ENCODE measurements at regions of chr3 and their contacts with region 1.

Region 1: GRCh38 chr3:131856171-131856570 is 178.6 kb downstream of the CPNE4 start:
- DNase-seq: no peak
- H3K4me3 ChIP-seq: no peak overlapping the region
- H3K27ac ChIP-seq: no peak overlapping the region
- H3K4me1 ChIP-seq: no peaks in the 10 kb centered on the region
- H3K27me3 ChIP-seq: no peaks in the 10 kb centered on the region
- CTCF ChIP-seq: no peak
- POLR2A ChIP-seq: no peak

Region 2: DNA sequence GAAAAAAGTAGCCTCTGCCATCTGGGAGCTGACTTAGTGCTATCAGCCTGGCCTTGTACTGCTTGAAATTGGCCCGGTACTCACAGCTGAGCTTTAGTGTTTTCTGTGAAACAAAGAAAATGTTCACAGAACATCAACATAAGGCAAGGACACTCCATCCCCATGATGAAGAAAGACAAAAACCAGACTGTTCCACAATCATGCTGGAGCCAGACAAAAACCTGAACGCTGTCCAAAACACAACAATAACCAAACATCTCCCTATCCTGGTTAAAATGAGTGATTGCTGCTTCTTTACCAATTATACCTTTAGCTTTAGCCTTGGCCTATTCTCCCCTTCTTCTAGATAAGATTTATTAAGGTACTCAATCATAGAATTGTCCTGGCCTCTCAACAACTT is 24.8 kb after region 1 on chr3:
- intact Hi-C with region 1: loop called (anchors 2 kb)
- DNase-seq: no peak
- H3K4me3 ChIP-seq: no peak overlapping the region
- H3K27ac ChIP-seq: no peak overlapping the region
- H3K4me1 ChIP-seq: no peaks in the 10 kb centered on the region
- H3K27me3 ChIP-seq: no peaks in the 10 kb centered on the region
- CTCF ChIP-seq: no peak
- POLR2A ChIP-seq: no peak

Region 3: GRCh38 chr3:133360490-133360889 is 1504.3 kb after region 1 on chr3:
- intact Hi-C with region 1: no loop called
- DNase-seq: no peak
- H3K4me3 ChIP-seq: no peak overlapping the region
- H3K27ac ChIP-seq: no peak overlapping the region
- H3K4me1 ChIP-seq: no peaks in the 10 kb centered on the region
- H3K27me3 ChIP-seq: no peaks in the 10 kb centered on the region
- CTCF ChIP-seq: no peak
- POLR2A ChIP-seq: no peak

Measured in breast epithelium (tissue), 4 donors.